Body of pancreas (tissue), 4 donors: ENCODE measurements at regions of chr17 and their contacts with region 1.

Region 1: GRCh38 chr17:69567130-69567529 is 152.6 kb downstream of the MAP2K6 start:
- DNase-seq: no peak
- ATAC-seq: no peak
- H3K4me3 ChIP-seq: no peak overlapping the region
- H3K27ac ChIP-seq: no peak overlapping the region
- H3K4me1 ChIP-seq: no peaks in the 10 kb centered on the region
- H3K27me3 ChIP-seq: no peaks in the 10 kb centered on the region
- CTCF ChIP-seq: no peak
- POLR2A ChIP-seq: no peak

Region 2: GRCh38 chr17:69492410-69493071 is 74.6 kb before region 1 on chr17:
- intact Hi-C with region 1: no loop called
- DNase-seq: no peak
- ATAC-seq: no peak
- H3K4me3 ChIP-seq: no peak overlapping the region
- H3K27ac ChIP-seq: no peak overlapping the region
- H3K4me1 ChIP-seq: no peaks in the 10 kb centered on the region
- H3K27me3 ChIP-seq: no peaks in the 10 kb centered on the region
- CTCF ChIP-seq: no peak
- POLR2A ChIP-seq: no peak

Region 3: DNA sequence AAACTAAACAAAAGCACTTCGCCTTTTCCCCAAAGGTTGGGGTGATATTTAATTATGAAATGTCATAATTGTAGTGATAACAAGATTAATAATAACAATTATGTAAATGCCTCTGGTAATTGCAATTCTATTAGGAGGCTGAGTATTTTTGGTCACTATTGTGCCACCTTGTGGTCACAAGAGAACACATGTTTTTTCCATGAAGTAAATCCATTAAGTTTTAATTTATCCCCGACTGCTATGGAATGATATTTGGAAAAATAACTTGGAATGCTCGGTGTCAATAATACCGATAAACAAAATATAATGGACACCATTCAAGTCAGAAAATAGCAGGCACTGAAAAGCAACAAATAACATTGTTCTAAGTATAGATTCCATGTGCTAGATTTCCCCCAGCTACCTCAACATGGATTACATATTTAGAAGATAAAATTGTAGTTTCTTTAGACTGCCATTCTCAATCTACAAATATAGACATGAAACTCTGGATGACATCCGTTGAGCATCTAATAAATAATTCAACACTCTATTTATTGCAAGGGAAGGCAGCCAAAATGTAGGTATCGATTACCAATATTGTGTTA is 577.2 kb after region 1 on chr17:
- intact Hi-C with region 1: loop called (anchors 10 kb)
- DNase-seq: peak in 1 of 4 donors; percentile 31
- ATAC-seq: no peak
- H3K4me3 ChIP-seq: no peak overlapping the region
- H3K27ac ChIP-seq: no peak overlapping the region
- H3K4me1 ChIP-seq: peaks cover 4% of the 10 kb centered on the region
- H3K27me3 ChIP-seq: no peaks in the 10 kb centered on the region
- CTCF ChIP-seq: peak in 6 of 7 experiments; percentile 63 to 78 (median 72)
- POLR2A ChIP-seq: no peak

Region 4: GRCh38 chr17:70552230-70552981 is 985.3 kb after region 1 on chr17:
- intact Hi-C with region 1: loop called (anchors 5 kb)
- DNase-seq: peak in 1 of 4 donors; percentile 10
- ATAC-seq: no peak
- H3K4me3 ChIP-seq: no peak overlapping the region
- H3K27ac ChIP-seq: no peak overlapping the region
- H3K4me1 ChIP-seq: no peaks in the 10 kb centered on the region
- H3K27me3 ChIP-seq: no peaks in the 10 kb centered on the region
- CTCF ChIP-seq: peak in 6 of 7 experiments; percentile 39 to 63 (median 56)
- POLR2A ChIP-seq: no peak